Activated T-helper 1 cell treated with anti-CD3 and anti-CD28 coated beads, Interleukin-12 subunit alpha, Interleukin-12 subunit beta, Interleukin-2, Interleukin-4 antibody, amounts not matched to agents 30 ng/mL and 10 ng/mL and 1 ng/mL, durations not matched to agents 14 hours and 24 hours and 36 hours (primary cell): ENCODE measurements at regions of chr11 and their contacts with region 1.

Region 1: GRCh38 chr11:73982969-73983740 is 512 bp upstream of the UCP2 start:
- DNase-seq: peak; percentile 94
- H3K4me3 Mint-ChIP-seq: peak overlapping the region; percentile 100
- H3K27ac Mint-ChIP-seq: peak overlapping the region; percentile 99
- H3K4me1 Mint-ChIP-seq: peaks cover 55% of the 10 kb centered on the region
- H3K27me3 Mint-ChIP-seq: no peaks in the 10 kb centered on the region

Region 2: DNA sequence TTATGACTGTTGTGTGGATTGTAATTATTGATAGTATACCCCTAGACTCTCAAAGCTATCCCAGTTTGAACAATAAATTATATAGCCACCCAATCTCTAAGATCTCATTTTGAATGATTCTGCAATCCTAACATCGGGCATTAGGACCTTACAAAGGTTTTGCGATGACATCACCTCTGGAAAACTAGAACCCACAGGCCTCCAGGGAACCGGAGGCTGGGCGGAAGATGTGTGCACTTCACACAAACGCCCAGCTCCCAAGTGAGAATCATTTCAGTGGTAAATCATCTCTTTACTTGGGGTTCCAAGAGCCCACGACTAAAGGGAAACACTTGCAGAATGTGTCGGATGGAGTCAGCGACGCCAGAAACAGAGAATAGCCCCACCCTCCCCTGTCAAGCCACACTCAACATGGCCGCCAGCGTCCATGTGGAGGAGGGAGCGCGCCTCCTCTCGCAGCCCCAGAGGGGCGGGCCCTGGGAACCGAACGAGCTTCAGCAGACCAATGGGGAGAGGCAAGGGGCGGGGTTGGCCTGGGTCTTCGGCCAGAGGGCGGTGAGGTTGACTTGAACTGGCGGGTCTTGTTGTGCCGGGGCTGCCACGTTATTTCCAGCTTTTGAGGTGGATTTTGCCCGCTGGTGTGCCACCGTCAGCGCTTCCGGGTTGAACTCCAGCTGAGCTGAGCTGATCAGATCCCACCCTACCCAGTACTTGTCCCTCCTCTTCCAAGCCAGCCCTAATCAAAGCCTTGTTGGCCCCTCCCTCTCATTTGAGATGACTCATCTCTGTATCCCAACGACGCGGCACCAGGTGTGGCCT is 203.9 kb before region 1 on chr11:
- intact Hi-C with region 1: no loop called
- DNase-seq: peak; percentile 97
- H3K4me3 Mint-ChIP-seq: peak overlapping the region; percentile 90
- H3K27ac Mint-ChIP-seq: peak overlapping the region; percentile 99
- H3K4me1 Mint-ChIP-seq: peaks cover 10% of the 10 kb centered on the region
- H3K27me3 Mint-ChIP-seq: no peaks in the 10 kb centered on the region

Region 3: GRCh38 chr11:73876424-73877300 is 106.5 kb before region 1 on chr11 and contains the starts of genes COA4 and PAAF1:
- intact Hi-C with region 1: loop called (anchors 5 kb)
- DNase-seq: peak; percentile 92
- H3K4me3 Mint-ChIP-seq: peak within 1 kb of the TSS; percentile 93
- H3K27ac Mint-ChIP-seq: peak within 1 kb of the TSS; percentile 100
- H3K4me1 Mint-ChIP-seq: peaks cover 30% of the 10 kb centered on the region
- H3K27me3 Mint-ChIP-seq: no peaks in the 10 kb centered on the region
- total RNA-seq, gene COA4: 99.1 and 102 TPM in 2 replicates
- total RNA-seq, gene PAAF1: 22.4 and 25.0 TPM in 2 replicates

Region 4: DNA sequence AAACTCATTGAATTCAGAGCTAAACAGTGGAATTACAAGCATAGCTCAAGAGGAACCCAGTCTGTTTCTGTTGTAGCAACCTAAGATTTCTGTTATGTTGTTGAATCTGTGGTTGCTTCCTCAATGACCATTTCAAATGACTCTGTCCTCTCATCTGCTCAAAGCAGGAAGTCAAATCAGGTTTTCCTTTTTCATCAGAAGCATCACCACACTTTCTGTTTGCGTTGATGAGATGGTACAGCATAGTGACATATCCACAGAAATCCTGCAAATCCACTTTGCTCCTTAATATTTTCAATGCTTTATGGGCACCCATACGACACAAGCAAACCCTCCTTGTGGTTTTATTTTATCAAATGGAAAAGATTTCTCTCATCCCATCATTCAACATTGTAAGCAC is 12.1 kb after region 1 on chr11:
- intact Hi-C with region 1: loop called (anchors 1 kb)
- DNase-seq: no peak
- H3K4me3 Mint-ChIP-seq: peak overlapping the region; percentile 45
- H3K27ac Mint-ChIP-seq: peak overlapping the region; percentile 94
- H3K4me1 Mint-ChIP-seq: peaks cover 59% of the 10 kb centered on the region
- H3K27me3 Mint-ChIP-seq: no peaks in the 10 kb centered on the region

Region 5: DNA sequence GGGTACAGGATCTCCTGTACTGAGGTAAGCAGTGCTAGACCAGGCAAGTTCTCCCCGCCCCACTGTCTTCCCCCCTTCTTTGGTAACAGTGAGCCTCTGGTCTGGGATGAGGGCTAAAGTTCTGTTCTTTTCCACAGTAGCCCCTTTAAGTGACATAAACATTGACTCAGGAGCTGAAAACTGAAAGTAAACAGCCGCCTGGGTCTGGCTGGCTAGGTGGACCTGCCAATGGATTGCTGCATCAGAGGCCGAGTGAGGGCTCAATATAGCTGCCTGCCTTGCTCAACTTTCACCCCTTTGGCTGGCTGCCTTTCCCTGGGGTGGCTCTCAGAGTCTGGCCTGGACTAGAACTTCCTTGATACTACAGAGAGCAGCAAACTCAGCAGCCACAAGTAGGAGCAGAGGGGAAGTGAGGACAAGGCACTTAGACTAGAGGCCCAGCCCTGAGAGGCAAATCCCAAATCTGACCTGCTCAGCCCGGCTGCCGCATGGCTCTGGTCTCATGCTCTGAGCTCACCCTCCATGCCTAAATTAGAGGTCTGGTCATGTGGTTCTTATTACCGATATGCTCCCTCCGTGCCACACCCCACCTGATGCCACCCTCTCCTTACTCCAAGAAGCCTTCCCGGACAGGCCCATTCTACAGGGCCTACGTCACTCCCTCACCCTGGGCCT is 35.3 kb after region 1 on chr11:
- intact Hi-C with region 1: loop called (anchors 1 kb)
- DNase-seq: no peak
- H3K4me3 Mint-ChIP-seq: no peak overlapping the region
- H3K27ac Mint-ChIP-seq: no peak overlapping the region
- H3K4me1 Mint-ChIP-seq: peaks cover 58% of the 10 kb centered on the region
- H3K27me3 Mint-ChIP-seq: no peaks in the 10 kb centered on the region